OCI-LY7 (cell line): ENCODE measurements at regions of chrX and their contacts with region 1.

Region 1: DNA sequence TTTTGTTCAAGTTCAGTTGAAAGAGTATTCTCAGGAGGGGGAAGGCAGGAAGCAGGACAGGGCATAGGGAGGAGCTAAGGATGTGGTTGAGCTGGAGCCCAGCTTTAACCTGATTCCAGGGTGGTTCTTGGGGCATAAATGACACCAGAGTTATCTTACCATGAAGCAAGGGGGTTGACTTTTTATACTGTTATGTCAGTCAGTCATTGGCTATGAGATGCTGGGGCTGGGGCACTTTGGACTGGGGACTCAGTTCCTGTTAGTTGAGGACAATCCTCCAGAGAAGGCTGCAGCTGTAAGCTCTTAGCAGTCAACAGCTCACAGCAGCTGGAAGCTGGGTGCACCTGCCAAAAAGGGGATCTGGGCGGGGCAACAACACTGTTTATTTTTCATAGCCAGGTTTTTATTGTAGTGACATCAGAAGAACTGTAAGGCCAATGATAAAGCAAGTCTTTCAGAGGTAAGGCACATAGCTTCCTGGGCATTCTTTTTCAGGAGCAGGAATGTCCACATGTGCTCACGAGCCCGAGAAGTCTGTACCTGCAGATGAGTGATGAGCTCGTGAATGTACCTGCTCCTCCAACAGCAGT is 78.5 kb downstream of the MID1IP1 start:
- DNase-seq: peak; percentile 95
- H3K4me3 ChIP-seq: peak overlapping the region; percentile 64
- H3K27ac ChIP-seq: peak overlapping the region; percentile 100
- H3K4me1 ChIP-seq: peaks cover 58% of the 10 kb centered on the region
- CTCF ChIP-seq: no peak

Region 2: GRCh38 chrX:38552721-38553120 is 327.0 kb before region 1 on chrX:
- CTCF ChIA-PET with region 1: no interaction called
- POLR2A ChIA-PET with region 1: no interaction called
- intact Hi-C with region 1: no loop called
- DNase-seq: no peak
- H3K4me3 ChIP-seq: no peak overlapping the region
- H3K27ac ChIP-seq: no peak overlapping the region
- H3K4me1 ChIP-seq: no peaks in the 10 kb centered on the region
- CTCF ChIP-seq: no peak

Region 3: GRCh38 chrX:38811515-38812243 is 68.0 kb before region 1 on chrX:
- CTCF ChIA-PET with region 1: interaction called, 5 read pairs
- POLR2A ChIA-PET with region 1: interaction called, 91 read pairs
- intact Hi-C with region 1: no loop called
- DNase-seq: no peak
- H3K4me3 ChIP-seq: no peak overlapping the region
- H3K27ac ChIP-seq: peak overlapping the region; percentile 37
- H3K4me1 ChIP-seq: peaks cover 65% of the 10 kb centered on the region
- CTCF ChIP-seq: no peak

Region 4: GRCh38 chrX:38817004-38817703 is 62.6 kb before region 1 on chrX:
- CTCF ChIA-PET with region 1: no interaction called
- POLR2A ChIA-PET with region 1: interaction called, 10 read pairs
- intact Hi-C with region 1: no loop called
- DNase-seq: no peak
- H3K4me3 ChIP-seq: no peak overlapping the region
- H3K27ac ChIP-seq: no peak overlapping the region
- H3K4me1 ChIP-seq: peaks cover 24% of the 10 kb centered on the region
- CTCF ChIP-seq: no peak

Region 5: GRCh38 chrX:38868941-38869401 is 10.8 kb before region 1 on chrX:
- CTCF ChIA-PET with region 1: no interaction called
- POLR2A ChIA-PET with region 1: interaction called, 32 read pairs
- intact Hi-C with region 1: no loop called
- DNase-seq: no peak
- H3K4me3 ChIP-seq: no peak overlapping the region
- H3K27ac ChIP-seq: no peak overlapping the region
- H3K4me1 ChIP-seq: peaks cover 6% of the 10 kb centered on the region
- CTCF ChIP-seq: no peak

Region 6: DNA sequence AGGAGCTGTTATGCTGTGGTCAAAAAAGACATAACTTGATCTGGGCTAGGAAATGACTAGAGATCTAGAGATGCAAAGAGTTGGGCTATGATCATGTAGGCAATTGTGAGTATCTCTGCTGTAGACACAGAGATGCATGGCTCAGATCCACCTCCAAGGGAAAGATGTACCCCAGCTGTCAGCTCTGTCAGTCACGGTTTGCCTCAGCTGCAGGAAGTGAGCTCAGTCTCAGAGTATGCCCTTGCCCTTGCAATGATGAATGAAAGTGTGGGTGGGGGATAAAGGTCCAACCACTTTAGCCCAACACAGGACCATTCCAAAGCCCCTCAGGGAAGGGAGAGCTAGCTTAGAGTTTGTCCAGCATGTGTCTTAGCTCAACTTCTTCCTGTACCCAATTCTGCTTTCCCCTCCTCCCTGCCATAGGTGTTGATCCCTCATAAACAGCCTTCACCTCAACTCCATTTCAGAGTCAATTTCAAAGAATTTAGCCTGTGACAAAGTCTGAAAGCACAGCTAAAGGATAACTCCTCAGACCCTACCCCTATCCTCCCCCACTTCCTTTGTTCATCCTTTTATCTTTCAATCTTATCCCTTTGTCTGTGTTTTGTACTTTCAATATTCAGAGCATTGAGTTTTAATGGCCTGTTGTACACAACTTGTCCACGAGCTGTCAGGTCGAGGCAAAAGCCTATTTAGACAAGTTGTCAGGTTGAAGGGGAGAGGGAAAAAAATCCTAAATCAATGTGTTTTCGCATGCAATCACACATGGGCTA is 12.1 kb after region 1 on chrX:
- CTCF ChIA-PET with region 1: interaction called, 3 read pairs
- POLR2A ChIA-PET with region 1: interaction called, 19 read pairs
- intact Hi-C with region 1: no loop called
- DNase-seq: peak; percentile 69
- H3K4me3 ChIP-seq: no peak overlapping the region
- H3K27ac ChIP-seq: peak overlapping the region; percentile 22
- H3K4me1 ChIP-seq: peaks cover 13% of the 10 kb centered on the region
- CTCF ChIP-seq: no peak